Uterus (tissue), 4 donors: ENCODE measurements at regions of chr1 and their contacts with region 1.

Region 1: DNA sequence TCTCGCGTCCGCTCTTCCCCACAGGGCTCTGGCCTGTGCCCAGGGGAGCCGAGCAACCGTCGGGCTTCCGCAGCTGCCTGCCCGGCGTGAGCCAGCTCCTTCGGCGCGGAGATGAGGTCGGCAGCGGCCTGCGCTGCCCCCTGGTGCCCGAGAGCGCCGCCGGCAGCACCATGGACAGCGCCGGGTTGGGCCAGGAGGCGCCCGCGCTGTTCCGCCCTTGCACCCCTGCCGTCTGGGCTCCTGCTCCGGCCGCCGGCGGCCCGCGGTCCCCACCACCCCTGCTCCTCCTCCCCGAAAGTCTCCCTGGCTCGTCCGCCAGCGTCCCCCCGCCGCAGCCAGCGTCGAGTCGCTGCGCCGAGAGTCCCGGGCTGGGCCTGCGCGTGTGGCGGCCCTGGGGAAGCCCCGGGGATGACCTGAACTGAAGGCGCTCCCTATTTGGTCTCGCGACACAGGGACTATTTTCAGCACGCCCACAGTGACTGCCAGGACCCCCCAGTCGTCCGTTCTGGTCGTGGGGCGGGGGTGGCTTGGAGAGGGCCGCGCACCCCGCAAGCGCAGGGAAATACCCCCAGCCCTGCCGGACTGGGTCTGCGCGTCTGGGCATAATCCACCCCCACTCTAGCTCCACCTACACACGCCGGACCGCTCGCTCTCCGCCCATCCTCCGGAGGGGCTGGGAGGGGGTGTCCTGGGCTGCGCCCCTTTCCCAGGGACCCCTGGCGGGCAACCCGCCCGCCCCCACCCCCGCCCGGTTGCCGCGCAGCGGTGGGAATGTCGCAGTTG is 1.3 kb downstream of the HES3 start:
- DNase-seq: peak; percentile 51 to 73
- H3K4me3 ChIP-seq: no peak overlapping the region
- H3K27ac ChIP-seq: no peak overlapping the region
- H3K4me1 ChIP-seq: peaks cover 0 to 17% of the 10 kb centered on the region in 2 donors
- H3K27me3 ChIP-seq: peaks cover 30 to 35% of the 10 kb centered on the region in 2 donors
- CTCF ChIP-seq: peak; percentile 60 to 96 (median 88)
- POLR2A ChIP-seq: no peak

Region 2: GRCh38 chr1:6162773-6163172 is 82.5 kb before region 1 on chr1:
- intact Hi-C with region 1: no loop called
- DNase-seq: no peak
- H3K4me3 ChIP-seq: no peak overlapping the region
- H3K27ac ChIP-seq: no peak overlapping the region
- H3K4me1 ChIP-seq: no peaks in the 10 kb centered on the region
- H3K27me3 ChIP-seq: no peaks in the 10 kb centered on the region
- CTCF ChIP-seq: no peak
- POLR2A ChIP-seq: no peak

Region 3: GRCh38 chr1:6347641-6348487 is 102.6 kb after region 1 on chr1:
- intact Hi-C with region 1: loop called (anchors 5 kb)
- DNase-seq: no peak
- H3K4me3 ChIP-seq: no peak overlapping the region
- H3K27ac ChIP-seq: no peak overlapping the region
- H3K4me1 ChIP-seq: no peaks in the 10 kb centered on the region
- H3K27me3 ChIP-seq: no peaks in the 10 kb centered on the region
- CTCF ChIP-seq: peak; percentile 5 to 23 (median 18)
- POLR2A ChIP-seq: no peak

Region 4: GRCh38 chr1:6401673-6402072 is 156.4 kb after region 1 on chr1:
- intact Hi-C with region 1: loop called (anchors 5 kb)
- DNase-seq: no peak
- H3K4me3 ChIP-seq: no peak overlapping the region
- H3K27ac ChIP-seq: no peak overlapping the region
- H3K4me1 ChIP-seq: no peaks in the 10 kb centered on the region
- H3K27me3 ChIP-seq: peaks cover 0 to 4% of the 10 kb centered on the region in 2 donors
- CTCF ChIP-seq: no peak
- POLR2A ChIP-seq: no peak

Region 5: DNA sequence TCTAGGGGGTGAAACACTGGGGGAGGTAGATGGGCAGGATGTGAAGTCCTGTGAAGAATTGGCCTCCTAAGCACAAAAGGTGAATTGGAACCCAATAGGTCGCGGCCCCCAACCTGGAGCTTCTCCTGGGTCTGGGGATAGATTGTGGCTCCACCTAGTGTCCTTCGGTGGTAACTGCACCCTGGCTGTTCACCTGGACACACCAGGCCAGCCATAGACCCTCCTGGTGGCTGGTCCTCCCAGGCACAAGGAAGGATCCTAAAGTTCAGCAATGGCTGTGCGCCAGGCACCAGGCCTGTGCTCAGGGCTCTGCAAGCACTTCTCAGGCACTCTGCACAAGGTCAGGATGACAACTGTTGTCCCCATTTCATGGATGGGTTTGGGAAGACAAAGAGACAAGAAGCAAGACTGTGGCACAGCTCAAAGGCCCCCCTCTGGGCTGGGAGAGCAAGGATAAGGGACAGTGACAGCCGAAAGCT is 192.8 kb after region 1 on chr1:
- intact Hi-C with region 1: loop called (anchors 5 kb)
- DNase-seq: peak; percentile 54 to 57
- H3K4me3 ChIP-seq: no peak overlapping the region
- H3K27ac ChIP-seq: no peak overlapping the region
- H3K4me1 ChIP-seq: no peaks in the 10 kb centered on the region
- H3K27me3 ChIP-seq: peaks cover 0 to 14% of the 10 kb centered on the region in 2 donors
- CTCF ChIP-seq: peak; percentile 75 to 90 (median 83)
- POLR2A ChIP-seq: no peak